Naive thymus-derived CD4-positive, alpha-beta T cell (primary cell): ENCODE measurements at regions of chr9 and their contacts with region 1.

Region 1: DNA sequence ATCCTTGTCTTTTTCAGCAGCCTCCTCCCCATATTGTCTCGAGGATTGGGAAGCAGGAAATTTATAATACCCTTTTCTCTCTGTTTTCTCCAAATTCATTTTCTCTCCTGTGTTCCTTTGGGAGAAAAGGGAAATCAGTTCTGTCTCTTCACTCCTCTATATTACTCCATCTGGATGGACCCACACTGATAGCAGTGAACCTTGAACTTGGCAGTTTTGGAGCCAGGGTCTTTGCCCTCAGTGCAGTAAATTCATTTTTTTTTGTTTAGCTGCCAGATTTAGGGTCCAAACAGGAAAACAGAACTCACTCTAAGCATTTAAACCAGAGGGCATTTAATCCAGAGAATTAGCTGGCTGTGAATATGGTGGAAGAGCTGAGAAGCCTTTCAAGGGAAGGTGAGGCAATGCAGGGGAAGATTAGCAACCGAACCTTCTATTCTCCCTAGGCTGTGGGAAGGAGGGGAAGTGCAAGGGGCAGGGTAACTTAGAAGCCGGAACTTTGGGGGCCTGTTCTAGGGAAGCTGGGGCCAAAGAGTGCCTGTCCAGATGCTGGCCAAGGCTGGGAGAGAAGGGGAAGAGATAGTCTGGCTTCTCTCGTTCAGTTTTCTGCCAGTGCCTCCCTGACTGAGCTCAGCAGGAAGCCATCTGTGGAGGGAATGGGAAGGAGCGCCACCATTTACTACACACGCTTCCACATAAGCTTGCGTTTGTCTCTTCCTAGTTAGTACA is 16.3 kb upstream of the NPR2 start:
- DNase-seq: no peak
- ATAC-seq: no peak
- H3K4me3 ChIP-seq: no peak overlapping the region
- H3K4me3 Mint-ChIP-seq: no peak overlapping the region
- H3K27ac ChIP-seq: no peak overlapping the region
- H3K27ac Mint-ChIP-seq: peak overlapping the region in 2 of 9 donors; percentile 58 to 80
- H3K4me1 ChIP-seq: no peaks in the 10 kb centered on the region
- H3K4me1 Mint-ChIP-seq: peaks cover 0 to 19% (median under 1%) of the 10 kb centered on the region in 7 donors
- H3K27me3 ChIP-seq: no peaks in the 10 kb centered on the region
- H3K27me3 Mint-ChIP-seq: no peaks in the 10 kb centered on the region

Region 2: GRCh38 chr9:35756275-35757225 is 18.5 kb before region 1 on chr9:
- CTCF ChIA-PET with region 1: no interaction called
- POLR2A ChIA-PET with region 1: interaction called, 3 read pairs
- intact Hi-C with region 1: loop called in 1 of 2 experiments (anchors 2 kb)
- DNase-seq: peak; percentile 58 to 80 (median 75)
- ATAC-seq: peak; percentile 95
- H3K4me3 ChIP-seq: peak overlapping the region; percentile 92
- H3K4me3 Mint-ChIP-seq: peak overlapping the region; percentile 89 to 100 (median 96)
- H3K27ac ChIP-seq: peak overlapping the region; percentile 82
- H3K27ac Mint-ChIP-seq: peak overlapping the region; percentile 88 to 99 (median 94)
- H3K4me1 ChIP-seq: peaks cover 6 to 9% of the 10 kb centered on the region in 2 donors
- H3K4me1 Mint-ChIP-seq: peaks cover 34 to 61% (median 52%) of the 10 kb centered on the region in 7 donors
- H3K27me3 ChIP-seq: no peaks in the 10 kb centered on the region
- H3K27me3 Mint-ChIP-seq: no peaks in the 10 kb centered on the region